CD4-positive, alpha-beta T cell (primary cell): ENCODE measurements at regions of chr18 and their contacts with region 1.

Region 1: GRCh38 chr18:4068552-4069158 is 386.5 kb downstream of the DLGAP1 start:
- DNase-seq: peak in 6 of 14 experiments; percentile 1 to 47 (median 21)
- ATAC-seq: peak; percentile 46
- H3K4me3 ChIP-seq: no peak overlapping the region
- H3K4me3 Mint-ChIP-seq: no peak overlapping the region
- H3K27ac ChIP-seq: no peak overlapping the region
- H3K27ac Mint-ChIP-seq: no peak overlapping the region
- H3K4me1 ChIP-seq: no peaks in the 10 kb centered on the region
- H3K4me1 Mint-ChIP-seq: no peaks in the 10 kb centered on the region
- H3K27me3 ChIP-seq: no peaks in the 10 kb centered on the region
- H3K27me3 Mint-ChIP-seq: no peaks in the 10 kb centered on the region
- CTCF ChIP-seq: peak; percentile 75

Region 2: GRCh38 chr18:3104190-3105054 is 964.2 kb before region 1 on chr18:
- CTCF ChIA-PET with region 1: no interaction called
- POLR2A ChIA-PET with region 1: no interaction called
- intact Hi-C with region 1: no loop called
- DNase-seq: no peak
- ATAC-seq: no peak
- H3K4me3 ChIP-seq: no peak overlapping the region
- H3K4me3 Mint-ChIP-seq: no peak overlapping the region
- H3K27ac ChIP-seq: no peak overlapping the region
- H3K27ac Mint-ChIP-seq: no peak overlapping the region
- H3K4me1 ChIP-seq: no peaks in the 10 kb centered on the region
- H3K4me1 Mint-ChIP-seq: peaks cover 3% of the 10 kb centered on the region
- H3K27me3 ChIP-seq: no peaks in the 10 kb centered on the region
- H3K27me3 Mint-ChIP-seq: no peaks in the 10 kb centered on the region
- CTCF ChIP-seq: no peak

Region 3: DNA sequence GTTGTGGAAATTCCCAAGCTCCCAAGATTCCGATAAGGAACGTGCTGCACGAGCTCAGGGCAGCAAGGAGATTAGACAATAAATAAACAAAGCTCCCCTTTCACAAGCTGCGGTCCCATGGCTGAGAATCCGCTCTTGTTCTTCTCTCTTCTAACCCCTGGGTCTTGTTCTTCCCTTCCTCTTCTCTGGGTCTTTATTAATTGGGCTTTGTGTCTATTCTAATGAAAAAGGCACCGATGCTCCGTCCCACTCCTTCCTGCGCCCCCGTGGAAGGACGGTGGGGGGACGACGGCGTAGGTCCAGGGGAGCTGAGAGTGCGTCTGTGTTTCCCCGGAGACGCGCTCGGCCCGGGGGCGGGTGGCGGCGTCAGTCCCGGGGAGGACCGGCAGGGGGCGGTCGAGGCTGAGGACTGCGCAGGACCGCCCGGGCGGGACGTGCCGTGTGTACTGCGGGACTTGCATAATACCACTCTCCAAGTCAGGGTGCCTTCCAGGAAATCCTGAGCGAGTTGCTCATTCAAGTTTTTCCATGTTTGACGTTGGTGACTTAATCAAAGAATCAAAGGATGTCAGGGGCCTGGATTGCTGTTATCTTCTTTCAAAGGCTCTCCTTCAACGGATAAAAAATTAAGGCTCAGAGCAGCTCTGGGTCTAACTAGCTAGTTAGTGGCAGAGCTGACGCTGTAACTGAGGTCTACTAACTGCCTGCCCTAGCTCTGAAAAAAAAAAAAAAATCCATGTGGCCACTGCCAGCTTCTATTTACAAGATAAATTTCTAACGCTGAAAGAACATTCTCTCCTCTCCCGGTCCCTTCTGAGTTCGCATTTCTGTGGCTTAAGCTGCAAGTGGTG is 297.3 kb before region 1 on chr18:
- CTCF ChIA-PET with region 1: no interaction called
- POLR2A ChIA-PET with region 1: no interaction called
- intact Hi-C with region 1: loop called (anchors 1 to 5 kb)
- DNase-seq: peak; percentile 41 to 81 (median 60)
- ATAC-seq: peak; percentile 98
- H3K4me3 ChIP-seq: peak overlapping the region; percentile 28
- H3K4me3 Mint-ChIP-seq: peak overlapping the region; percentile 64
- H3K27ac ChIP-seq: no peak overlapping the region
- H3K27ac Mint-ChIP-seq: no peak overlapping the region
- H3K4me1 ChIP-seq: peaks cover 9% of the 10 kb centered on the region
- H3K4me1 Mint-ChIP-seq: peaks cover 14% of the 10 kb centered on the region
- H3K27me3 ChIP-seq: peaks cover 0 to 12% of the 10 kb centered on the region in 2 experiments
- H3K27me3 Mint-ChIP-seq: peaks cover 46% of the 10 kb centered on the region
- CTCF ChIP-seq: peak; percentile 75

Region 4: DNA sequence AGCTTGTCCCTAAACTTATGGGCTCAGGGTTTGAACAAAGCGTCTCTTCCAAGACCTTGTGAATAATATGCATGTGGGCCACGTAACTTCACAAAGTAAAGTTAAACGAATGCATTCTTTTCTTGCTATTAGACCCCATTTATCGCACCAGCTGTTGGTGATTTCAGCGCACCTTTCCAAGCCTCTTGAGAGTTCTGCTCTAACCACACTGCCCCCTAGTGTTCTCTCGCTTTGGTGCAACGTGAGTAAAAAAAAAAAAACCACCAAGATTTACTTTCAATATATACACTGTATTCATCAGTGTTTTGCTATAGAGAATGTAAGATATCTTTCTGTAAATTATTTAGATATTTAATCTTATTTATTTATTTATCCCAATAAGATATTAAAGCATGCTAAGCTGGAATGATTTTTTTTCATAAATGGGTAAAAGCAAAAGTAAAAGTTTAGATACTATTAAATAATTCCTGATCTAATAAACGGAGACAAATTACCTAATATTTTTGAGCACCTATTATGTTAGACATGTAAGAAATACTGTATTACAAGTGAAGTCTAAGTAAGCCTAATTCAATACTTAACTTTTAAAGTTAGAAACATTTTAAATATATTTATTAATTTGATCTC is 73.1 kb before region 1 on chr18:
- CTCF ChIA-PET with region 1: no interaction called
- POLR2A ChIA-PET with region 1: no interaction called
- intact Hi-C with region 1: no loop called
- DNase-seq: peak in 13 of 14 experiments; percentile 8 to 78 (median 35)
- ATAC-seq: peak; percentile 56
- H3K4me3 ChIP-seq: no peak overlapping the region
- H3K4me3 Mint-ChIP-seq: no peak overlapping the region
- H3K27ac ChIP-seq: no peak overlapping the region
- H3K27ac Mint-ChIP-seq: no peak overlapping the region
- H3K4me1 ChIP-seq: no peaks in the 10 kb centered on the region
- H3K4me1 Mint-ChIP-seq: no peaks in the 10 kb centered on the region
- H3K27me3 ChIP-seq: no peaks in the 10 kb centered on the region
- H3K27me3 Mint-ChIP-seq: peaks cover 5% of the 10 kb centered on the region
- CTCF ChIP-seq: peak; percentile 76

Region 5: GRCh38 chr18:4144201-4144600 is 75.5 kb after region 1 on chr18:
- CTCF ChIA-PET with region 1: no interaction called
- POLR2A ChIA-PET with region 1: no interaction called
- intact Hi-C with region 1: no loop called
- DNase-seq: no peak
- ATAC-seq: no peak
- H3K4me3 ChIP-seq: no peak overlapping the region
- H3K4me3 Mint-ChIP-seq: no peak overlapping the region
- H3K27ac ChIP-seq: no peak overlapping the region
- H3K27ac Mint-ChIP-seq: no peak overlapping the region
- H3K4me1 ChIP-seq: no peaks in the 10 kb centered on the region
- H3K4me1 Mint-ChIP-seq: no peaks in the 10 kb centered on the region
- H3K27me3 ChIP-seq: no peaks in the 10 kb centered on the region
- H3K27me3 Mint-ChIP-seq: peaks cover 9% of the 10 kb centered on the region
- CTCF ChIP-seq: no peak